Activated T-helper 2 cell treated with anti-CD3 and anti-CD28 coated beads, Interferon-gamma antibody, Interleukin-2, Interleukin-4, amounts not matched to agents 10 μg/mL and 5 μg/mL and 100 μg/mL, durations not matched to agents 14 hours and 24 hours and 36 hours (primary cell): ENCODE measurements at regions of chr1 and their contacts with region 1.

Region 1: GRCh38 chr1:115469703-115470476 is 131.8 kb upstream of the NGF start:
- DNase-seq: no peak
- H3K4me3 Mint-ChIP-seq: no peak overlapping the region
- H3K27ac Mint-ChIP-seq: no peak overlapping the region
- H3K4me1 Mint-ChIP-seq: peaks cover 2% of the 10 kb centered on the region
- H3K27me3 Mint-ChIP-seq: no peaks in the 10 kb centered on the region

Region 2: GRCh38 chr1:115138968-115139367 is 330.9 kb before region 1 on chr1:
- intact Hi-C with region 1: loop called (anchors 5 kb)
- DNase-seq: peak; percentile 41
- H3K4me3 Mint-ChIP-seq: no peak overlapping the region
- H3K27ac Mint-ChIP-seq: no peak overlapping the region
- H3K4me1 Mint-ChIP-seq: no peaks in the 10 kb centered on the region
- H3K27me3 Mint-ChIP-seq: peaks cover 26% of the 10 kb centered on the region

Region 3: GRCh38 chr1:115275212-115275611 is 194.7 kb before region 1 on chr1:
- intact Hi-C with region 1: loop called (anchors 1 kb)
- DNase-seq: no peak
- H3K4me3 Mint-ChIP-seq: no peak overlapping the region
- H3K27ac Mint-ChIP-seq: no peak overlapping the region
- H3K4me1 Mint-ChIP-seq: no peaks in the 10 kb centered on the region
- H3K27me3 Mint-ChIP-seq: no peaks in the 10 kb centered on the region